ENCODE measurements at regions of chr13 and their contacts with region 1.

Region 1: GRCh38 chr13:27362064-27362883 is 62.1 kb upstream of the GTF3A start:
- DNase-seq: peak; percentile 94
- ATAC-seq: peak; percentile 94

Region 2: DNA sequence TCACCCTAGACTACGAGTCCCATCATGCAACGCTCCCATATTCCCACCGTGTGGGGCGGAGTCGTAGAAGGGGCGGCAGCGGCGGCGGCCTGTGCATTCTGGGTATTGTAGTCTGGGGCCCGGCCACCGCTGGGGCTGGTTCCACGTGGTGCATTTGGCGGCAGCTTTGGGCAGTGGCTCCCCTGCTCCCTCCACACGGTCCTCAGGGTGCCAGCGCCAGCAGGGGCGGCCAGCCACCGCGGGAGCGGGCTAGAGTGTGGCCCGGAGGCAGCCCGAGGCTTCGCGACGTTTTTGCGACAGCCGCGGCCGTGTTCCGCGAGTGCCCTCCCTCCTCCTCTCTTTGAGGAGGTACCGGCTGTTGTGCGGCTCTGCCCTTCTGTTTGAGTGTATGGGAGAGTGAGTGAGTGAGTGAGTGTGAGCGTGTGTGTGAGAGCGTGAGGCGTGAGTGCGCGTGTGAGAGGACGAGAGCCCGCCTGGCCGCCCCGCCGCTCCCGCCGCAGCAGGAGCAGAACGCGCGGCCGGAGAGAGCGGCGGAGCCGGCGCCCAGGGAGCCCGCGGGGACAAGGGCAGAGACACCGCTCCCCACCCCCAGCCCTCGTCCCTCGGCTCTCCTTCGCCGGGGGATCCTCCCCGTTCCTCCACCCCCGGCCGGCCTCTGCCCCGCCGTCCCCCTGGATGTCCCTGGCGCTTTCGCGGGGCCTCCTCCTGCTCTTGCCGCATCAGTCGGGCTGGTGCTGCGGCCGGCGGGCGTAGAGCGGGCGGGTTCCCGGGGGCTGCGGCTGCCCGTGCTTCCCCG is 1108.3 kb before region 1 on chr13 and contains the start of gene CDK8:
- intact Hi-C with region 1: no loop called
- DNase-seq: peak; percentile 95
- ATAC-seq: peak; percentile 96
- total RNA-seq, gene CDK8: 10.3 TPM

Region 3: DNA sequence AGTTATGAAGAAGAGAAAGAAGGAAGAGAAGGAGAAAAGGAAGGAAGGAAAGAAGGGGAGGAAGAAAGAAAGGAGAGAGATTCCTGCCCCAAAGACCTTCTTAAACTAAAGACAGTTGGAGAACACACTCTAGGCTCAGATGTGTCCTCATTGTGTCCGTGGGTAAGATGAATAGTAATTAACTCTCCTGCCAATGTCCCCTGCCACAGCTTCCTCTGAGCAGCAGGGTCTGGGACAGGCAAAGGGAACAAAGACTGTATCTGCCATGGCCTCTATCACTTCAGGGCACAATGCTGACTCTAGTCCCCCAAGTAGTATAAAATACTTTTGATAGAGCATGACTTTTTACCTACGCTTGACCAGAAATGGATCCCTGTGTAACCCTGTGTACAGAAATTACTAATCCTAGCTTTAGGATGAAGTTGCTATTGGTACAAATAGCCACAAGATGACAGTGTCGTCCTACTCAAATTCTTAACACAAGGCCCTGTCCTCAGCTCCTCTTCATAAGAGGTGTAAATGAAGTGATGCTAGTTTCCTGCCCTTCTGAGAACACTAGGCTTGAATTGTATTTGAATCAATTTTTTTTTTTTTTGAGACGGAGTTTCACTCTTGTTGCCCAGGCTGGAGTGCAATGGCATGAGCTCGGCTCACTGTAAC is 415.5 kb before region 1 on chr13:
- intact Hi-C with region 1: loop called (anchors 2 kb)
- DNase-seq: no peak
- ATAC-seq: peak; percentile 80

Region 4: GRCh38 chr13:27270594-27271520 is 91.4 kb before region 1 on chr13 and contains the start of gene RASL11A:
- intact Hi-C with region 1: loop called (anchors 5 kb)
- DNase-seq: peak; percentile 93
- ATAC-seq: peak; percentile 96
- total RNA-seq, gene RASL11A: 10.6 TPM

Region 5: GRCh38 chr13:27985600-27985999 is 623.3 kb after region 1 on chr13:
- intact Hi-C with region 1: loop called (anchors 2 kb)
- DNase-seq: no peak
- ATAC-seq: no peak

Measured in Right ventricle myocardium inferior (tissue), 1 donor.